AG04449 (cell line): ENCODE measurements at regions of chr7 and their contacts with region 1.

Region 1: GRCh38 chr7:33062782-33063443 is 337 bp upstream of the NT5C3A start:
- DNase-seq: peak; percentile 58
- H3K4me3 ChIP-seq: peak overlapping the region; percentile 87
- CTCF ChIP-seq: no peak

Region 2: DNA sequence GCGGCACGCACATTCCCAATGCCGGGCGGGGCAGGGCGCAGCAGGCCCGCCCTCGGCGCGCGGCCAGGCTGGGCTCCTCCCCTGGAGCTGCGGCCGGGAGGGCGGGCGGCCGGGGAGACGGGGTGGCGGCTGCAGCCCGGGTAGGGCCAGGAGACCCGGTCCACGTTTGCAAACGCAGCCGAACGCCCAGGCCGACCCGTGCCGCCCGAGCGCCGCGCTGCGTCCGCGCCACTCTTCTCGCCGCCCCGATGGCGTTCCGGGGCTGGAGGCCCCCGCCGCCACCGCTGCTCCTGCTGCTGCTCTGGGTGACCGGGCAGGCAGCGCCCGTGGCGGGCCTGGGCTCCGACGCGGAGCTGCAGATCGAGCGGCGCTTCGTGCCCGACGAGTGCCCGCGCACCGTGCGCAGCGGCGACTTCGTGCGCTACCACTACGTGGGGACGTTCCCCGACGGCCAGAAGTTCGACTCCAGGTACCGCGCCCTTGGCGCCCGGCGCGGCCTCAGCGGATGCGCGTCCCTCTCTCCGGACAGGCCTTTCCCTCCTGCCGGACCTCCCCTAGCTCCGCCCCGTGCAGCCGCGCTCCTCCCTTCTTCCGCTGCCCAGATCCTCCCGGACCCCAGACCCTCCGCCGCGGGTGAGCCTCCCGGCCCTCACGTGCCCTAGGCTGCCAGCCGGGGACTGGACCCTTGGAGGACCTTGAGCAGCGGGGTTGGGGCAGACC is 105.4 kb before region 1 on chr7 and contains the start of gene FKBP9:
- CTCF ChIA-PET with region 1: interaction called, 3 read pairs
- POLR2A ChIA-PET with region 1: interaction called, 10 read pairs
- DNase-seq: no peak
- H3K4me3 ChIP-seq: peak within 1 kb of the TSS; percentile 87
- CTCF ChIP-seq: no peak

Region 3: DNA sequence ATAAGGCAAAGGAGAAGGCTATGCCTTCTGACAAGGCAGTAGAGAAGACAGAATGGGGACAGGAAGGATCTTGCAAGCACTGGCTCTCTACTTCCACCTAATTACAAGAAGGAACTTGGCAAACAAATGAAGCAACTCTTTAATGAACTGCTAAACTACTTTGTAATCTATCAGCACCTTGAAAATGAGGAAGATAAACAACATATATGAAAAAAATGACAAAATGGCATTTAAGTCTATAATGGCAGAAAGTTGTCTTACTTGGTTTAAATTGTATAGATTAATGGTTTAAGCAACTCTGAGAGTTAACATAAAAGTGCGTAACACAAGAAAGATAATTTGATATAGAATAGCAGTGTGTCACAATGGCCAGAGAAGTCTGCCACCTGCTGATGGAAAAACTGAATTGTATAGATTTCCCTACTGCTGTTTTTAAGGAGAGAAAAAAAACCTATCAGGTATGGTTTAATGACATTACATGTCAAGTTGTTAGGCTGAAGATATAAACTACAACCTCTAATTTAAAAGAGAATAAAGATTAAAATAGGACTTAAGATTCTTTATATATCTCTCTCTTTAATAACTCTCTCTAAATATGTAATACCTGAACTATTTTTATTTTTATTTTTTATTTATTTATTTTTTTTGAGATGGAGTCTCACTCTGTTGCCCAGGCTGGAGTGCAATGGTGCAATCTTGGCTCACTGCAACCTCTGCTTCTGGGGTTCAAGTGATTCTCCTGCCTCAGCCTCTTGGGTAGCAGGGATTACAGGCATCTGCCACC is 12.2 kb before region 1 on chr7:
- CTCF ChIA-PET with region 1: interaction called, 17 read pairs
- POLR2A ChIA-PET with region 1: interaction called, 5 read pairs
- DNase-seq: no peak
- H3K4me3 ChIP-seq: no peak overlapping the region
- CTCF ChIP-seq: peak; percentile 36

Region 4: DNA sequence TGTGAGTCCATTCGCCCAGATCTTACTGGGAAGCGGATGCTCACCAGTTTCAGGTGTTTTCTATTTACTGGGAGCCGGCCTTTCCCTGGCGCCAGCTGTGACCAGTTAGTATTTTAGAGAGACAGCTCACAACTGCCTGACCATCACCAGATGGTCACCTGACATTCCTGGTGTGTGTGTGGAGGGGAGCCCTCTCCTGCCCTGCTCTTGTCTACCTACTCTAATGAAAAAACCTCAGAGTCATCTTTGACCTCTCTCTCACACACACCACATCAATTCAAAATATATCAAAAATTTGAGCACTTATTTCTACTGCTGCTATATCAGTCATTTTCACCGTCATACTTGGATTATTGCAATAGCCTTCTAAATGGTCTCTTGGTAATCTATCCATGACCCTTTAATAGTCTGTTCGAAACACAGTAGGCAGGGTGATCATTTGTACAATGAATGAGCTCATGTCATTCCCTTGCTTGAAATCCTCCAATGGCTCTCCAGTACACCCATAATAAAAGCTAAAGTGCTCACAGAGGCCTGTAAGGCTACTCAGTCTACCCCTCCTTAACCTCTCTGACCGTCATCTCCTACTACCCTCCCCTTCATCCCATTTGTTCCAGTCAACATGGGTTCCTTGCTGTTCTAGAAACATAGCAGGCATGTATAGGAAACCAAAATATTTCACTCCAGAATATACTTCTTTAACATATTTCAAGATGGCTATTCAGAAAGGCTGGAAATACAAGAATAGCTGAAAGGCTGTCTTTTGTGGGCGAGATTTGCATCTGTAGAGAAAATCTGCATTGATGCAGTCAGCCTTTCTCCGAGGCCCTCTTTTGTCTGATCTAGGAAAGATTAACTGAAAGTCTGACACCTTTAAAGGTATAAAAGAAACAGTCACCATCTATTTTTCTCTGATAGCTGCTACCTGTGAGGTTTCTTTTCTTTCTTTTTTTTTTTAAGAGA is 17.1 kb after region 1 on chr7:
- CTCF ChIA-PET with region 1: no interaction called
- POLR2A ChIA-PET with region 1: no interaction called
- DNase-seq: no peak
- H3K4me3 ChIP-seq: no peak overlapping the region
- CTCF ChIP-seq: no peak